ENCODE measurements at regions of chr4 and their contacts with region 1.

Region 1: GRCh38 chr4:48906206-48907173 is at the start of gene OCIAD2:
- DNase-seq: peak; percentile 90
- H3K4me3 Mint-ChIP-seq: peak within 1 kb of the TSS; percentile 89
- H3K27ac Mint-ChIP-seq: peak within 1 kb of the TSS; percentile 90
- H3K4me1 Mint-ChIP-seq: peaks cover 56% of the 10 kb centered on the region
- H3K27me3 Mint-ChIP-seq: no peaks in the 10 kb centered on the region
- total RNA-seq, gene OCIAD2: 59.7 to 76.9 TPM

Region 2: DNA sequence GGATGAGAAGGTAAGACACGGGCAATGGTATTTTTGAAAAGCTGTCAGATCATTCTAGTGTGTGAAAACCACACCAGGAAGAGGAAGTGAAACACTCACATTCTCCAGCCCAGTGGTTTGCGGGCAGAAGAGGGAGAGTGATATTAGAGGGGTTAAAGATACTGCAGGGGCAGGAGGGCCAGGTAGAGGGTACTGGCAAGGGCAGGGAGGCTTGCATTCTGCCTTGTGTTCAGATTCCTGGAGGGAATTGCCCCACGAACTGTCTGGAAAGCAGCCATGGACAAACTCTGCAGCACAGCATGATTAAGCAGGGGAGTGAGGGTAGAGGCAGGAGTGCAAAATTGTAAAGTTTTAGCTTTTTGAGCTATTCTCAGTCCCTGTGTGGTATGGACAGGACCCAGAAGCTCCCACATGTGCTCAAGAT is 859.1 kb before region 1 on chr4:
- CTCF ChIA-PET with region 1: no interaction called
- intact Hi-C with region 1: loop called (anchors 10 kb)
- DNase-seq: peak; percentile 91
- H3K4me3 Mint-ChIP-seq: peak overlapping the region; percentile 1
- H3K27ac Mint-ChIP-seq: no peak overlapping the region
- H3K4me1 Mint-ChIP-seq: peaks cover 58% of the 10 kb centered on the region
- H3K27me3 Mint-ChIP-seq: no peaks in the 10 kb centered on the region

Region 3: GRCh38 chr4:48429709-48430474 is 476.6 kb before region 1 on chr4:
- CTCF ChIA-PET with region 1: no interaction called
- intact Hi-C with region 1: loop called (anchors 1 kb)
- DNase-seq: peak; percentile 16
- H3K4me3 Mint-ChIP-seq: no peak overlapping the region
- H3K27ac Mint-ChIP-seq: no peak overlapping the region
- H3K4me1 Mint-ChIP-seq: peaks cover 49% of the 10 kb centered on the region
- H3K27me3 Mint-ChIP-seq: no peaks in the 10 kb centered on the region

Region 4: DNA sequence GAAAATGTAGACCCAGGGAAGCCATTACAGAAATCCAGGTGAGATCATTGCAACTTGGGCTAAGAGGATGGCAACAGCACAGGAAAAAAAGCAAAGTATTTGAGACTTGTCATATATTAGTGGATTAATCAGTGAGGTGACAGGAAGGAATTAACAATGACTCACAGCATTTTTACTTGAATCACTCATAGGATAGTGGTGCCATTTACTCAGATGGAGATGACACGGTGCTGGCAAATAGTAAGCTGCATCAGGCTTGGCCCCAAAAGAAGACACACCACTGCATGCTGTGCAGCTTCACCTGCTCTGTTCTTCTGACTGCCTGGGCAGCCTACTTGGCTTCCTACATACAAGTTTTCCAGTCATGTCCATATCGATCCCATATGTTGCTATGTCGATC is 271.2 kb before region 1 on chr4:
- CTCF ChIA-PET with region 1: no interaction called
- intact Hi-C with region 1: loop called (anchors 5 kb)
- DNase-seq: peak; percentile 53
- H3K4me3 Mint-ChIP-seq: no peak overlapping the region
- H3K27ac Mint-ChIP-seq: no peak overlapping the region
- H3K4me1 Mint-ChIP-seq: peaks cover 11% of the 10 kb centered on the region
- H3K27me3 Mint-ChIP-seq: no peaks in the 10 kb centered on the region

Region 5: DNA sequence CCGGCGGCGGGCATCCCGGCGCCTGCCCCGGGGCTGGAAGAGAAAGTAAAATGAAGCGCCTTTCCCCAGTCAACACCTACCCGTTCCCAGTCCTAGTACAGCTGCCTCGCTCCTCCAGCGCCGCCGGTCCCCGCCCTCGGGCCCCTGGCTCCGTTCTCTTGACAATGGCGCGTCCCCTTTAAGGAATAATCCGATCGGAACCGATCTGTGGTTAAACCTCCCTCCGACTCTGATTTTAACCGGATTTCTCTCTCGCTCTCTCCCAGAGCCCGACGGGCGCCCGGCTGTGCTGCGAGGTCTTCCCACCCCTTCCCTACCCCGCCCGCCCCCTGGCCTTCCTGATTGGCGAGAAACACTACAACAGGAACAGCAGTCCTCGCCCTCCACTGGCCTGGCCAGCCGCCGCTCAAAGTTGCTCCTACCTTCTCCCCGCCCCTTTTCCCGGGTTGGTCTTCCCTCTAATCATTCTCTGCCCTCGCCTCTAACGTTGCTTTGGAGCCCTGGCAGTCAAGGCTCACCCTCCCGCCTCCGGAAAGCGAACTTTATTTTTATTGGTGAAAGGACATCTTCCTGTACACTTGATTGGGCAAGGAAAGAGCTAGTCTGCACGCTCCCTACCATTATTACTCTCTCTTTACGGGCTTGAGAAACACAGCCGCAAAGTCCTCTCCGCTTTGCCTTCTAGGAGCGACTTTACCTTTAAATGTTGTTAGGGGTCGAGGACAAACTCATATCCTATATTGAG is 126.3 kb before region 1 on chr4 and contains the start of gene FRYL:
- CTCF ChIA-PET with region 1: interaction called, 5 read pairs
- intact Hi-C with region 1: loop called (anchors 1 kb)
- DNase-seq: peak; percentile 100
- H3K4me3 Mint-ChIP-seq: peak within 1 kb of the TSS; percentile 92
- H3K27ac Mint-ChIP-seq: peak within 1 kb of the TSS; percentile 98
- H3K4me1 Mint-ChIP-seq: peaks cover 41% of the 10 kb centered on the region
- H3K27me3 Mint-ChIP-seq: no peaks in the 10 kb centered on the region
- total RNA-seq, gene FRYL: 44.8 to 54.2 TPM

Region 6: DNA sequence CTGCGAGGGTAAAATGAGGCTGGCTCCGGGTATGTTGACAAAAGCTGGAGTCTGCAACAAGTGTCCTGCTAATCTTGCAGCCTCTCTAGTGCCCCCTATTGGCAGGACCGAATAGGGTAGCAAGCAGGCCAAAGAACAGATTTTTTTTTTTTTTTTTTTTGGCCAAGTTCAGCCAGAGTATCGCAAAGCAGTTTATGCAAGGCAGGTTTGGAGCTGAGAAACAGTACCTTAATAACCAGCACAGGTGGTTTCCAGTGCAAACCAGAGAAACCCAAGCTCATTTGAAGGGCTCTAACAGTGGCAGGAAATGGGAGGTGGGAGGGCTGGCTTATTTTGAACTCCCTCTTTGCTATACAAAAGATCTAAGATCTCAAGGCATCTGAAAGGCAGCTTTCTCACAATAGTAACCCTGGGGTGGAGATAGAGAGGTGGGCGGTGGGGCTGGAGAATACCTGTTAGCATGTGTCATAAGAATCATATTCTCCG is 38.3 kb after region 1 on chr4:
- CTCF ChIA-PET with region 1: interaction called, 15 read pairs
- intact Hi-C with region 1: loop called (anchors 1 kb)
- DNase-seq: peak; percentile 81
- H3K4me3 Mint-ChIP-seq: no peak overlapping the region
- H3K27ac Mint-ChIP-seq: no peak overlapping the region
- H3K4me1 Mint-ChIP-seq: peaks cover 22% of the 10 kb centered on the region
- H3K27me3 Mint-ChIP-seq: no peaks in the 10 kb centered on the region